B cell (primary cell): ENCODE measurements at regions of chr4 and their contacts with region 1.

Region 1: DNA sequence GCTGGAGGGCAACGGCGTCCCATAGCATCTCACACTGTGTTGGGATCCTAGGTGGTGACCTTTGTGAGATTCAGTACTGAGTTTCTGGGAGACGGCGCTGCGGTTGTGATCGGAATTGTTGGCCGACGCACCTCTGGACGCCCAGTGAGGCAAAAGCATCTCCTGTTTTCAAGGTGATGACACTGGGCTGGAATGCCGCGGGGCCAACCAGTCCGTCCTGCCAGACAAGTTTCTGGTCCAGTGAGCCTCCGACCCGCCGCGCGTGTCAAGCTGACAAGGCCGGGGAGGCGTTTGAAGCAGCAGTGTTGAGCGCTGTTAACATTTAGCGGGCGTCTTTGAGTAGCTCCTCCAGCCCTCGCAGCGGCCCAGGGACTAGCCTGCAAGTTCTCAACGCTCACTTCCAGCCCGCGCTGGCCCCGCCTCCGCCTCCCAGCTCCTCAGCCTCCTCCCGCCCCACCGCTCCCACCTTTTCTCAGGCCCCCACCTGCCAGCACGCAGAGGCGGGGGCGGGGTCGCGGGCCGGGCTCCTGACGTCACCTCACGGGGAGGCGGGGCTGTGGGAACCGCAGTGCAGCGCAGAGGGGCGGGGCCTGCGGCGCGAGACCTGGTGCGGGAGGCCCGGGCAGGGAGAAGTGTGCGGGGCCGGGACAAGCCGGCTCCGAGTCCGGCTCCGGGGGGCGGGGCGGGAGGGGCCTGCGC is 476 bp upstream of the CDS1 start:
- DNase-seq: peak; percentile 85
- ATAC-seq: peak; percentile 86
- H3K4me3 ChIP-seq: peak overlapping the region in 4 of 5 experiments; percentile 40 to 66 (median 60)
- H3K4me3 Mint-ChIP-seq: peak overlapping the region; percentile 82
- H3K27ac ChIP-seq: no peak overlapping the region
- H3K27ac Mint-ChIP-seq: peak overlapping the region; percentile 38
- H3K4me1 ChIP-seq: peaks cover 15 to 19% of the 10 kb centered on the region in 2 donors
- H3K4me1 Mint-ChIP-seq: peaks cover 18% of the 10 kb centered on the region
- H3K27me3 ChIP-seq: peaks cover 0 to 48% (median 35%) of the 10 kb centered on the region in 4 experiments
- H3K27me3 Mint-ChIP-seq: peaks cover 65% of the 10 kb centered on the region
- CTCF ChIP-seq: no peak

Region 2: GRCh38 chr4:84498935-84499623 is 83.4 kb before region 1 on chr4 and contains the start of gene NKX6-1:
- CTCF ChIA-PET with region 1: no interaction called
- POLR2A ChIA-PET with region 1: no interaction called
- intact Hi-C with region 1: loop called (anchors 10 kb)
- DNase-seq: peak; percentile 23
- ATAC-seq: peak; percentile 21
- H3K4me3 ChIP-seq: peak within 1 kb of the TSS in 4 of 5 experiments; percentile 12 to 49 (median 38)
- H3K4me3 Mint-ChIP-seq: peak within 1 kb of the TSS; percentile 82
- H3K27ac ChIP-seq: no peak within 1 kb of the TSS
- H3K27ac Mint-ChIP-seq: peak within 1 kb of the TSS; percentile 50
- H3K4me1 ChIP-seq: peaks cover 31 to 52% of the 10 kb centered on the region in 2 donors
- H3K4me1 Mint-ChIP-seq: peaks cover 19% of the 10 kb centered on the region
- H3K27me3 ChIP-seq: peaks cover 3 to 86% (median 84%) of the 10 kb centered on the region in 4 experiments
- H3K27me3 Mint-ChIP-seq: peaks cover 73% of the 10 kb centered on the region
- CTCF ChIP-seq: no peak
- total RNA-seq, gene NKX6-1: not detected in 2 replicates

Region 3: DNA sequence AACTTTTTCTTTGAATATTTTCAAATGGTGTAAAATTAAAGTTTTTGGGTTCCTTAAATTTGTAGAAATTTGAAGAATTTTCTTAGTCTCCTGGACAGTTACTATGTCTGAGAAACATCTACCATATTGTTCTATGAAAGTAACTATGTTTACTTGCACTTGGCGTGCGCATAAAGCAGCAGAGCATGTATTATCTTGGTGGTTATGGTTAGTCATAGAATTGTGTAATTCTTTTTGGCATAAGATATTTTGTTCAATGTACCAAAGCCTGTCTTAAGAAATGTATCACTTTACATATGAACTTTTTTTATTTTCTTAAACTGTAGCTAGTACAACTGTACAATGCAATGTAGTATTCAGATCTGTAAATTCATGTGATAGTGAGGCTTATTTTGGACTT is 49.6 kb after region 1 on chr4:
- CTCF ChIA-PET with region 1: no interaction called
- POLR2A ChIA-PET with region 1: no interaction called
- intact Hi-C with region 1: no loop called
- DNase-seq: no peak
- ATAC-seq: no peak
- H3K4me3 ChIP-seq: no peak overlapping the region
- H3K4me3 Mint-ChIP-seq: no peak overlapping the region
- H3K27ac ChIP-seq: no peak overlapping the region
- H3K27ac Mint-ChIP-seq: no peak overlapping the region
- H3K4me1 ChIP-seq: no peaks in the 10 kb centered on the region
- H3K4me1 Mint-ChIP-seq: no peaks in the 10 kb centered on the region
- H3K27me3 ChIP-seq: peaks cover 0 to 3% (median 0%) of the 10 kb centered on the region in 4 experiments
- H3K27me3 Mint-ChIP-seq: peaks cover 6% of the 10 kb centered on the region
- CTCF ChIP-seq: no peak